AG04450 (cell line): ENCODE measurements at regions of chr12 and their contacts with region 1.

Region 1: GRCh38 chr12:108850854-108851573 is 6.4 kb downstream of the SSH1 start:
- DNase-seq: no peak
- H3K4me3 ChIP-seq: no peak overlapping the region
- H3K27ac ChIP-seq: peak overlapping the region; percentile 49
- H3K27me3 ChIP-seq: no peaks in the 10 kb centered on the region
- CTCF ChIP-seq: peak; percentile 21; the same call in 1 of the 2 replicates

Region 2: DNA sequence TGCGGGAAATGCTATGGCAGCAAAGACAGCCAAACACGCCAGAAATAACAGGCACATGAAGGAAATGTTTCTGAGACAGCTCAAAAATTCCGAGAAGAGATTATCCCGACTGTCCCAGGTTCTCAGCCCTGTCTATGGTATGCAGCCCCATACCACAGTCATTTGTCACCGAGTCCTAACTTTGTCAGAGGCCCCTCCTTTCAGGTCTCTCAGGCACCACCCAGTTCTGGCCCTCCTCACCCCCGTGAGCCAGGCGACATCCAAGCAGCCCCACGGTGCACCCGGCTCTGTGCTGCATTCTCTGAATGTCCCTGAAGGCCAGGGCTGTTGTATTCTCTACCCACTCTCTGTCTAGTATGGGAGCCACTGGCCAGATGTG is 17.7 kb before region 1 on chr12:
- CTCF ChIA-PET with region 1: interaction called, 5 read pairs
- POLR2A ChIA-PET with region 1: interaction called, 22 read pairs
- DNase-seq: no peak
- H3K4me3 ChIP-seq: peak overlapping the region; percentile 33
- H3K27ac ChIP-seq: peak overlapping the region; percentile 100
- H3K27me3 ChIP-seq: no peaks in the 10 kb centered on the region
- CTCF ChIP-seq: no peak

Region 3: DNA sequence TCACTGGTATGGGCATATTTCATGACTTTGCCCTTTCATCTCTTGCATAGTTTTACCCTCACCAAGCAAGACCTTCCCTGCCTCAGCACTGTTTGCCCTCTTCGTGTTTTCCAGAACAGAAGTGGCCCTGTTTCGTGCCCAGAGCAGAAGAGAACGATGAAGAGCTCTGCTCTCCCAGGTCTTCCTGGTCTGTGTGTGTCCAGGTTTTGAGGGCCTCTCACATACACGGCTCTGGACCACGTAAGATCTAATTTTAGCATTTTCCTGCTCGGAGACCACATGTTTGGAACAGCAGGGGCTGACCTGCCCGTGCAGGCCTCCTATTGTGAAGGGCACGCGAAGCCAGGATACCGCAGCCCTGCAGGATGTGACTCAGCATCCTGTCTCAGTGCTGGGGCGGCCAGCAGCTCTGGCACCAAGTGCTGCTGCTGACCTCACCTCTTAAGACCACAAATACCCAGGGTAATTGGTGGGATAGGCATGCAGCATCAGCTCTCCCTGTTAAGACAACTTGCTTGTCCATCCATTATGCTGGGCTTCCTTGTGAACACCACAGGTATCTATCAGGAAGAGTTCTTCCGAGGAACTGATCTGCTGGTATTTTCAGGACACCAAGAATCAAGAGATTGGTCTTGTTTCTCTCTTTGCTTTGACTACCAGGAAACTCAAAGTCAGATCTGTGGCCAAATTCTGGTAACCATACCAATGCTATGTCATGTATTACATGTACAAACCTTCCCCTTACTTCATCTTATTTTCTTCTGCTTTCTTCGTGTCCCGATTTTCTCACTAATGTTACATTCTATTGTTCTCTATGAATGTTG is 12.6 kb before region 1 on chr12:
- CTCF ChIA-PET with region 1: interaction called, 5 read pairs
- POLR2A ChIA-PET with region 1: interaction called, 22 read pairs
- DNase-seq: peak; percentile 100
- H3K4me3 ChIP-seq: peak overlapping the region; percentile 20; the same call in 1 of the 2 replicates
- H3K27ac ChIP-seq: peak overlapping the region; percentile 98
- H3K27me3 ChIP-seq: no peaks in the 10 kb centered on the region
- CTCF ChIP-seq: no peak